Spleen (tissue), 13 donors: ENCODE measurements at regions of chr14 and their contacts with region 1.

Region 1: GRCh38 chr14:69107407-69108003 is 45.4 kb downstream of the DCAF5 start:
- DNase-seq: no peak
- H3K4me3 ChIP-seq: no peak overlapping the region
- H3K27ac ChIP-seq: no peak overlapping the region
- H3K4me1 ChIP-seq: no peaks in the 10 kb centered on the region
- H3K27me3 ChIP-seq: no peaks in the 10 kb centered on the region
- CTCF ChIP-seq: peak; percentile 20 to 76 (median 62)
- POLR2A ChIP-seq: no peak

Region 2: DNA sequence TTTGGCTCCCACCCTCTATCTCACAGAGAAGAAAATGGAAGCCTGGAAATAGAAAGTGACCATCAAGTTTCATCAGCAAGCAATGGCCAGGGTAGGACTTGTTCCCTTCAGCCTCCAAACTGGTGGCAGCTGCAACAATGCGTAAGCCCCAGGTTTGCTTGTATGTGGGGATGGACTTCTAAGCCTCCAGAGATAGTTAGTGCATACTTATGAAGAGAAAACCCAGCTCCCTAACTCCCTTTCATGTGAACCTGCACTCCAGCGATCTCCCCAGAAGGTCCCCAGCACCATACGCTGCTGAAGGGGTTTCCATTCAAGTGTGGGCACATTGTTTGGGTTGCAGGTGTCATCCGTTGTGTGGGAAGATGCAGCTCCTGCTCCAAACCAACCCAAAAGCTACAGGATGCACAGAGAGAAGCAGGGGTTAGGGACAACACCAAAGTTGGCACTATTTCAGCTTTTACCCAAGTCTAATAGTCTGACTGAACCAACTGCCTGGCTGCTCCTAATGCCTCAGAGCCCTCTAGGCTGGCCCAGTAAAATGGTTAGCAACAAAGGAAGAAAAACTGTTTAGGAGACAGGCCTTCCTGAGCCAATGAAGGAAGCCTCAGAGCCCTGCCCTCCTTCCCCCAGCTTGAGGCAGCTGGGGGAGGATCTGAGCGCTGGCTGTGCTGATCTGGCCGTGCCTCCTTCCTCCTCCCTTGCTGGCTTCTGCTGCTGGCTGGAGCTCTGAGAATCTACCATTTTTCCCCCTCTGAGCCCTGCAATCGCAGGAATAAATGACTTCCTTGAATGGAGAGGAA is 326.9 kb before region 1 on chr14:
- intact Hi-C with region 1: no loop called
- DNase-seq: peak; percentile 88
- H3K4me3 ChIP-seq: peak overlapping the region in 3 of 8 donors; percentile 2 to 43 (median 10)
- H3K27ac ChIP-seq: peak overlapping the region; percentile 37 to 100 (median 79)
- H3K4me1 ChIP-seq: peaks cover 42 to 90% (median 61%) of the 10 kb centered on the region in 6 donors
- H3K27me3 ChIP-seq: no peaks in the 10 kb centered on the region
- CTCF ChIP-seq: no peak
- POLR2A ChIP-seq: no peak

Region 3: DNA sequence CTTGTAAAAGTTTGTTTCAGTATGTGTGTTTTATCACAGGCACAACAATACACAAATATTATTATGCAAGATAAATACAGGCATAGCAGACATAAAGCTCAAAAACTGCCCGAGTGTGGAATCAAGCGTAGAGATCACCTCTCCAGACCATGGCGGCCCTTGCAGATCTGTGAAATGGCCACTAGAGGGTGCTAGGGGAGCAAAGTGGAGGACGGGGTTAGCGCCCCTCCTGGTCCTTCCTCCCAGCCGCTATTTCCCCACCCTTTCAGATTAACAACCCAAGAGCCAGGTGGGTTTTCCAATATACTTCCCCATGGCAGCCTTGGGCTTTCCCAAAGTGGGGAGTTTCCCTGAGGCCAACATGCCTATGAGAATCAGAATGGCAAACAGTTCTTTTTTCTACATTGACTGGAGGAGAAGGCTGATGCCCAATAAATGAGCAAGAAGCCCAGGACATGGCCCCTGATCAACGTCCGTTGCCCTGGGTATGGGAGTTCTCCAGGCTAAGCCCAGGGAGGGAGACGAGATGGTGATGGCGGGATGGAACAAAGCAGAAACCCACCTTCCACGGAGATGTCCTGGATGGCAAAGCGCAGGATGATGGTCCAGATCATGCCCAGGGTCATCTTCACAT is 195.8 kb before region 1 on chr14:
- intact Hi-C with region 1: loop called (anchors 5 kb)
- DNase-seq: peak; percentile 87
- H3K4me3 ChIP-seq: peak overlapping the region in 1 of 8 donors; percentile 4
- H3K27ac ChIP-seq: peak overlapping the region in 5 of 8 donors; percentile 13 to 62 (median 44)
- H3K4me1 ChIP-seq: peaks cover 0 to 36% (median 13%) of the 10 kb centered on the region in 6 donors
- H3K27me3 ChIP-seq: peaks cover 0 to 6% (median 0%) of the 10 kb centered on the region in 7 donors
- CTCF ChIP-seq: peak; percentile 85 to 97 (median 95)
- POLR2A ChIP-seq: no peak